Panc1 (cell line): ENCODE measurements at regions of chr20 and their contacts with region 1.

Region 1: GRCh38 chr20:31390490-31390889 is at the start of gene DEFB119:
- DNase-seq: no peak
- ATAC-seq: no peak
- H3K4me3 ChIP-seq: no peak within 1 kb of the TSS
- H3K27ac ChIP-seq: no peak within 1 kb of the TSS
- H3K4me1 ChIP-seq: no peaks in the 10 kb centered on the region
- H3K27me3 ChIP-seq: peaks cover 15% of the 10 kb centered on the region
- CTCF ChIP-seq: no peak
- total RNA-seq, gene DEFB119: not detected

Region 2: DNA sequence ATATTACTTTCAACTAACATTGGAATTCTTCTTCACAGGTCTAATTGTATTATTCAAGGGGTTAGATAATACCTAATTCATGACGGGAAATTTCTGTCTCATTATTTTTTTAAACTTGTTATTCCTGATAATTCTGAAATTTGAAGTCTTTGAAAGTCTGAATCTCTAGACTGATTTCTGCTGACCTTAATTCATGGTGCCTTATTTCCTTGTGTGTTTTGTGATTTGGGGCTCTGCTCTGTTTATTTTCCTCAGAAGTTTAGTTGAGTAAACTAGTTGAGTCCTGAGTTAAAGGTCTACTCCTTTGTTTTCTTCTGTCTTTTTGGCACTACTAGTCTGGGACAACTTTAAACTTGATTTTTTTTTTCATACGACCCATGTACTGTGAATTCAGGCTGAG is 16.1 kb before region 1 on chr20:
- CTCF ChIA-PET with region 1: no interaction called
- POLR2A ChIA-PET with region 1: interaction called, 17 read pairs
- in situ Hi-C with region 1: no loop called
- intact Hi-C with region 1: no loop called
- DNase-seq: no peak
- ATAC-seq: no peak
- H3K4me3 ChIP-seq: no peak overlapping the region
- H3K27ac ChIP-seq: no peak overlapping the region
- H3K4me1 ChIP-seq: no peaks in the 10 kb centered on the region
- H3K27me3 ChIP-seq: peaks cover 22% of the 10 kb centered on the region
- CTCF ChIP-seq: no peak

Region 3: DNA sequence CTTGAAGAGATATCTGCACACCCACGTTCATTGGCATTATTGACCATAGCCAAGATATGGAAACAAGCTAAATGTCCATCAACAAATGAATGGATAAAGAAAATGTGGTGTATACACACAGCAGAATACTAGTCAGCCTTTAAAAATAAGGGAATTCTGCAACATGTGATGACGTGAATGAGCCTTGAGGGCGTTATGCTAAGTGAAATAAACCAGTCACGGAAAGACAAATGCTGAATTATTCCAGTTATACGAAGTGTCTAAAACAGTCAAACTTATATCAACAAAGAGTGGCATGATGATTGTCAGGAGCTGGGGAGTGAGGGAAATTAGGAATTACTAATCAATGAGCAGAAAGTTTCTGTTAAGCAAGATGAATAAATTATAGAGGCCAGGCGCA is 23.9 kb after region 1 on chr20:
- CTCF ChIA-PET with region 1: interaction called, 19 read pairs
- POLR2A ChIA-PET with region 1: no interaction called
- in situ Hi-C with region 1: no loop called
- intact Hi-C with region 1: no loop called
- DNase-seq: no peak
- ATAC-seq: no peak
- H3K4me3 ChIP-seq: no peak overlapping the region
- H3K27ac ChIP-seq: no peak overlapping the region
- H3K4me1 ChIP-seq: no peaks in the 10 kb centered on the region
- H3K27me3 ChIP-seq: peaks cover 16% of the 10 kb centered on the region
- CTCF ChIP-seq: no peak

Region 4: GRCh38 chr20:31951530-31952453 is 561.3 kb after region 1 on chr20 and contains the start of gene PDRG1:
- CTCF ChIA-PET with region 1: no interaction called
- POLR2A ChIA-PET with region 1: no interaction called
- in situ Hi-C with region 1: no loop called
- intact Hi-C with region 1: no loop called
- DNase-seq: peak; percentile 93
- ATAC-seq: peak; percentile 99
- H3K4me3 ChIP-seq: peak within 1 kb of the TSS; percentile 79 to 97
- H3K27ac ChIP-seq: peak within 1 kb of the TSS; percentile 96
- H3K4me1 ChIP-seq: peaks cover 16% of the 10 kb centered on the region
- H3K27me3 ChIP-seq: no peaks in the 10 kb centered on the region
- CTCF ChIP-seq: peak; percentile 100
- total RNA-seq, gene PDRG1: 48.2 TPM

Region 5: DNA sequence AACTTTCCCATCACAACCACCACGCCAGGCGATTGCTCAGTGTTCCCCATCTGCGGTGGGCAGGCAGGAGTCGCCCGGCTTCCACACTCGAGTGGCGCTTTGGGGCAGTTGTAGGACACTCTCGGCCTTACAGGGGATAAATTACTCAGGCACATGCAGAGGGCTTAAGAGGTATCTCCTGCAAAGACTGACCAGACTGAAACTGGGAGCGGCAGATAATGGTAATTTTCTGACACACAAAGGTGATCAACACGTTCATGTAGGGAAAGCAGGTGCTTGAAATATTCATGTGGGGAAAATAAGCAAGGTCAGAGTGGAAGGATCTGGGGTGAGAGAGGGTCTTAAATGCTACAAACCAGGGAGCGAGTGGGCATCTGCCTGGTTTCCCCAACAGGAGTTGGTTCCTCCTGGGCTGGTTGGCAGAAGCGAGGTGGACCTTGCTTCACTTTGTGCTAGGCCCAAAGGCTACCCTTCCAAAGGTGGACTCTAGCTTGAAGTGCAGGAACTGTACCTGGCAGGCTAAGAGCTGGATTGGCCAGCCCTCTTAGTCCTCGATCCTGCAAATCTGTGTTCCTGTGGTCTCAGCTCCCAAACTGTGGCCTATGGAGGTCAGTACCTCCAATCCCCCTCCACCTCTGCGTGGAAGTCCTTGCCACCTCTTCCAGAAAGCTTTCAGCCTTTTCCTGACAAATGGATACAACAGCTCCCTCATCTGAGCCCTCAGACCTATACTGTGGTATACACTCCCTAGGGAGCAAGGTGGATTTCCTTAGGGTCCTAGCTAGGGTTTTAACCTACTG is 800.3 kb after region 1 on chr20:
- CTCF ChIA-PET with region 1: no interaction called
- POLR2A ChIA-PET with region 1: no interaction called
- in situ Hi-C with region 1: no loop called
- intact Hi-C with region 1: no loop called
- DNase-seq: no peak
- ATAC-seq: peak; percentile 63
- H3K4me3 ChIP-seq: peak overlapping the region; percentile 42 to 48
- H3K27ac ChIP-seq: peak overlapping the region; percentile 58
- H3K4me1 ChIP-seq: peaks cover 9% of the 10 kb centered on the region; the same call in 1 of the 2 replicates
- H3K27me3 ChIP-seq: no peaks in the 10 kb centered on the region
- CTCF ChIP-seq: no peak

Region 6: DNA sequence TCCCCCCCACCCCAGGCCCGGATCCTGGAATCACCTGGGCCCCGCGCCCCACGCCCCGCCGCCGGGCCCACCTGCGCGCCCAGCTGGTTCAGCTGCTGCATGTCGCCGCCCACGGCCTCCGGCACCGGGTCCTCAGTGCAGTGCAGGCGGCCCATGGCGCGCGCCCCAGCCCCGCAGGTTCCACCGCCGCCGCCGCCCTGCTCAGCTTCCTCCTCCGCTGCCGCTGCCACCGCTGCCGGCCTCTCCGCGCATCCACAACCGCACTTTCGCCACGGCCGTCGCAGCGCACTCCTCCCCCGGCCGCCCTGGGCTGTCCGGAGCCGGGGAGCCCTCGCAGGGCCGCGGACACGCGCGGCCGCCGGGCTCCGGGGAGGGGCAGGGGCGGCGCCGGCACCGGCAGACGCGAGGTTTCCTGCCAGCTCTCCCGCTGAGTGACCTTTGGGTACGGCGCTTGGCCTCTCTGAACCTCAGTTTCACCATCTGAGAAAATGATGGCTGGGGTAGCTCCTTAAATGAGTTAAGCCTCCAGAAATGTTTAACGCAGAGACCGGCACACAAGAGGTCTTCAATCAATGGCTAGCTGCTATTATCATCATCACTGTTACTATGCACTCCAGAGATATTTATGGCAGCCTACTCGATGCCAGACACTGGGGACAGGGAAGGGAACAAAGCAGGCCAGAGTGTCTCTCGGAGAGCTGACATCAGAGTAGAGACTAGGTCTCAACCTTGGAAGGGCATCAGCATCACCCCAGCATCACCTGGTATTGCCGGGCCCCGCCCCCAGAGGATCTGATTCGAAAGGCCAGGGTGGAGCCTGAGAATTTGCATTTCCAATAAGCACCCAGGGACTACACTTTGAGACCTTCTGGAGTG is 1353.0 kb after region 1 on chr20 and contains the start of gene COMMD7:
- CTCF ChIA-PET with region 1: no interaction called
- POLR2A ChIA-PET with region 1: no interaction called
- in situ Hi-C with region 1: no loop called
- intact Hi-C with region 1: no loop called
- DNase-seq: no peak
- ATAC-seq: peak; percentile 78
- H3K4me3 ChIP-seq: peak within 1 kb of the TSS; percentile 57 to 63
- H3K27ac ChIP-seq: peak within 1 kb of the TSS; percentile 74
- H3K4me1 ChIP-seq: peaks cover 7% of the 10 kb centered on the region; the same call in 1 of the 2 replicates
- H3K27me3 ChIP-seq: no peaks in the 10 kb centered on the region
- CTCF ChIP-seq: no peak
- total RNA-seq, gene COMMD7: 24.8 TPM